K562 (cell line): ENCODE measurements at regions of chr17 and their contacts with region 1.

Region 1: GRCh38 chr17:68457539-68458259 is 403 bp upstream of the WIPI1 start:
- DNase-seq: peak; percentile 97 to 99 (median 98)
- ATAC-seq: peak; percentile 94
- H3K4me3 ChIP-seq: peak overlapping the region; percentile 46
- H3K27ac ChIP-seq: no peak overlapping the region; the same call in 1 of the 3 replicates
- H3K4me1 ChIP-seq: peaks cover 13 to 44% of the 10 kb centered on the region in 2 experiments
- H3K27me3 ChIP-seq: no peaks in the 10 kb centered on the region
- CTCF ChIP-seq: no peak
- EP300 ChIP-seq: 0 out of 2 replicates have a peak, but pooled peaks have one; percentile 10
- POLR2A ChIP-seq: no peak
- RAD21 ChIP-seq: no peak

Region 2: DNA sequence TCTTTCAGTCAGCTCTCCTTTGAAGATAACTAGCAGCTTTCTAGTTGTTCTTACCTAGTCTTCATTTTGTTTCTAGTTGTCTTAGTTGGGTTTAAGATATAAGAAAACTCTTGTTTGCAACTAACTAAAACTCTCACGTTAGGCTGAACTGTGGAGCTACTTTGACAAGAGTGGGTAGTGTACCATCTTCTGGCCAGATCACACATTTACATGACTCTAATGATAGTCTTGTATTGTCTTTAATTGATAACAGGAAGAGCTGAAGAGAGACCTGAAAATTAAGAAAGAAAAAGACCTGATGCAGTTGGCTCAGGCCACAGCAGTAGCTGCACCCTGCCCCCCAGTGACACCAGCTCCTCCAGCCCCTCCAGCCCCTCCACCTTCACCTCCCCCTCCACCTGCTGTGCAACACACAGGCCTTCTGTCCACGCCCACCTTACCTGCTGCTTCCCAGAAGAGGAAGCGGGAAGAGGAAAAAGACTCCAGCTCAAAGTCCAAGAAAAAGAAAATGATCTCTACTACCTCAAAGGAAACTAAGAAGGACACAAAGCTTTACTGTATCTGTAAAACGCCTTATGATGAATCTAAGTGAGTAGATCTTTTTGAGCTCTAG is 498.3 kb before region 1 on chr17:
- CTCF ChIA-PET with region 1: no interaction called
- POLR2A ChIA-PET with region 1: no interaction called
- in situ Hi-C with region 1: loop called (anchors 25 kb)
- intact Hi-C with region 1: no loop called
- DNase-seq: no peak
- ATAC-seq: no peak
- H3K4me3 ChIP-seq: no peak overlapping the region
- H3K27ac ChIP-seq: no peak overlapping the region
- H3K4me1 ChIP-seq: peaks cover 0 to 2% of the 10 kb centered on the region in 2 experiments; a peak in 1 of 5 replicates
- H3K27me3 ChIP-seq: no peaks in the 10 kb centered on the region
- CTCF ChIP-seq: no peak; a peak in 1 of 6 replicates
- EP300 ChIP-seq: no peak
- POLR2A ChIP-seq: no peak
- RAD21 ChIP-seq: no peak

Region 3: DNA sequence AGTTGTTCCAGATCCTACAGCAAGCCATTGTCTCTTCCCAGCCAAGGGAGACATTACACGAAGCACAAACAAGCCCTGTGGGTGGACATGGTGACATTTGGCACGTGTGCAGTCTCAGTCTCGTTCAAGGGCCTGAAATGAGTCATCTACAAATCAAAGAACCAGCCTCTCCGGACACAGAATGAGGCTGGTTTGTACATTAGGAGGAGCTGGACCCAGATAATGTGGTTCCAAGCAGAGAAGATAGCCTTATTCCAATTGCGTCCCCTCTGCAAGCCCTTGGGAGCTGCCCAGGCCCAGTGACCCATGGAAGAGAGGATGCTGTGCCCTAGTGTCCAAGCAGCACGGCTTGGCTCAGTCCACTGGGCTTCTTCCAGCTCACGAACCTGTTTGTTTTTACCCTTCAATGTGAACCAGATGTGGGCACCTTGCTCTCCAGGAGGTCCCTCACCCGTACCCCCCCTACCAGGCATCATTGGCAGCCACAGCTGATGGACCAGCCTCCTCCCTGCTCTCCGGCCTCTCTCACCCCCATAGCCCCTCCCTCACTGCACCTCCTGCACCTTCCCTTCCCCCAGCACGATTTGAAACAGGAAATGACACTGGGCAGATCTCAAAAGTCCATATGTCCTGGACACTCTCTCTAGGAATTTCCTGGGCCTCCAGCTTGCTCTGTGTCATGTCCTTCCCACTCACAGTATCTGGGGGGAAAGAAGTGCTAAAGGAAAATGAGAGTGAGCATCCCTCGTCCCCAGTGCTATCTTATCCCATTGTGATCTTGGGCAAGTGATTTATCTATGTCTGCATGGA is 396.0 kb before region 1 on chr17:
- CTCF ChIA-PET with region 1: no interaction called
- POLR2A ChIA-PET with region 1: no interaction called
- in situ Hi-C with region 1: no loop called
- intact Hi-C with region 1: loop called (anchors 5 kb)
- DNase-seq: no peak
- ATAC-seq: peak; percentile 28; the same call in 2 of the 3 replicates
- H3K4me3 ChIP-seq: no peak overlapping the region
- H3K27ac ChIP-seq: no peak overlapping the region
- H3K4me1 ChIP-seq: no peaks in the 10 kb centered on the region
- H3K27me3 ChIP-seq: no peaks in the 10 kb centered on the region
- CTCF ChIP-seq: no peak
- EP300 ChIP-seq: no peak
- POLR2A ChIP-seq: no peak
- RAD21 ChIP-seq: no peak

Region 4: DNA sequence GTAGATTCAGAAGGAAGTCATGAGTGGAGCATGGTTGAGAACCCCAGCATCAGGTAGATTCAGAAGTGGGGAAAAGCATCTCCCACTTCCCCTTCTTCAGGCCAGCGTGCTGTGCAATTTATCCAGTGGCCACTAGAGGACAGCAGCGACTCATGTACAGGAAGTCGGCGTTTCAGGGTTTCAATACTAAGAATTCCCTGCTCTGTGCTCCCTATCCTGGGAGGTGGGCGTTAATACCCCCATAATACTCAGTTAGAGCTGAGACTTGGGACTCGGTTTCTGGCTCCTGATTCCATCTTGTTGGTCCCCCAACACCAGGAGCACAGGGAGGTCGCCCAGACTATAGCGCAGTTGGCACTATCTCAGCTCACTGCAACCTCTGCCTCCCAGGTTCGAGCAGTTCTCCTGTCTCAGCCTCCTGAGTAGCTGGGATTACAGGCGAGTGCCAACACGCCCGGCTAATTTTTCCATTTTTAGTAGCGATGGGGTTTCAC is 285.2 kb before region 1 on chr17:
- CTCF ChIA-PET with region 1: interaction called, 5 read pairs
- POLR2A ChIA-PET with region 1: no interaction called
- in situ Hi-C with region 1: loop called (anchors 10 kb)
- intact Hi-C with region 1: no loop called
- DNase-seq: peak; percentile 26 to 73 (median 33)
- ATAC-seq: peak; percentile 89
- H3K4me3 ChIP-seq: no peak overlapping the region
- H3K27ac ChIP-seq: no peak overlapping the region
- H3K4me1 ChIP-seq: peaks cover 0 to 6% of the 10 kb centered on the region in 2 experiments; a peak in 3 of 5 replicates
- H3K27me3 ChIP-seq: no peaks in the 10 kb centered on the region; a peak in 2 of 5 replicates
- CTCF ChIP-seq: peak; percentile 82 to 95 (median 94)
- EP300 ChIP-seq: no peak
- POLR2A ChIP-seq: no peak
- RAD21 ChIP-seq: peak; percentile 91 to 93

Region 5: DNA sequence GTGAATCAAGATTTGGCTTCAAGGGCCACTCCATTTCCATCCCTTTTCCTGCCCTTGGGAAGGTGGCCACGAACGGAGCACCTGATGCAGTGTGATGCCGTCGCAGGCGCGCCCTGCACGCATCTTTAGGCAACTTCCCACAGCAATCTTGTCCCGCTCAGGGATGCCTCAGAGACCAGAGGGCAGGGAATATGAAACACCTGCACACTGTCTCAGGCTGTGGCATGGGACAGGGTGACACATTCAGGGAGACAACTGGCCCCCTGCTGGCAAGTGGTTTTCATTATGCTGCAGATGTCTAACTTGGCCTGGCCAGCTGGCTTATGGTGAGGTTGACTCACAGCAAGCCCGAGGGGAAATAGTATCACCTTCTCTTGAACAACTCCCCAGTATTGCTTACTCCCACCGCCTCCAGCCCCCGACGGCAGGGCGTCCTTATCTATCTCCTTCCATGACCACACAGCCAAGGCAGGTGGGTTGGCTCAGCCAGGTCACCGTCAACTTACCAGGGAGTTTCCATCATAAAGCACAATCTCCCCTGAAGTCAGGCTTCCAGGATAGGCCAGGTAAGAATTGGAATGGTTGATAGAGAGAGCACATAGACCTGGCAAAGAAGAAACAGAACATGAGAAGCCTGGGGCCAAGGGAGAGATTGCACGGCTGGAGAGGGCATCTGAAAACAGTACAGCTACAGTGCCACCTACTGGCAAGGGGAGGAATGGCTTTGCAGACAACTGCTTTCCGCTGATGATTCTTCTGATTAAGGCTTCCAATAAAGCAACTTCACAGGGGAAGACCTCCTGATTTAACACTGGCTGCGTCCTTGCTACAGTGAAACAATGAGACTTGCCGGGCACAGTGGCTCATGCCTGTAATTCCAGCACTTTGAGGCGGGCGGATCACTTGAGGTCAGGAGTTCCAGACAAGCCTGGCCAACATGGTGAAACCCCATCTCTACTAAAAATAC is 21.5 kb before region 1 on chr17:
- CTCF ChIA-PET with region 1: interaction called, 3 read pairs
- POLR2A ChIA-PET with region 1: interaction called, 8 read pairs
- in situ Hi-C with region 1: no loop called
- intact Hi-C with region 1: loop called (anchors 2 kb)
- DNase-seq: peak; percentile 69 to 87 (median 72)
- ATAC-seq: peak; percentile 79
- H3K4me3 ChIP-seq: no peak overlapping the region
- H3K27ac ChIP-seq: no peak overlapping the region; the same call in 2 of the 3 replicates
- H3K4me1 ChIP-seq: peaks cover 17 to 28% of the 10 kb centered on the region in 2 experiments
- H3K27me3 ChIP-seq: no peaks in the 10 kb centered on the region
- CTCF ChIP-seq: peak; percentile 79 to 93 (median 91)
- EP300 ChIP-seq: 0 out of 2 replicates have a peak, but pooled peaks have one; percentile 6
- POLR2A ChIP-seq: no peak
- RAD21 ChIP-seq: peak; percentile 66 to 76

Region 6: DNA sequence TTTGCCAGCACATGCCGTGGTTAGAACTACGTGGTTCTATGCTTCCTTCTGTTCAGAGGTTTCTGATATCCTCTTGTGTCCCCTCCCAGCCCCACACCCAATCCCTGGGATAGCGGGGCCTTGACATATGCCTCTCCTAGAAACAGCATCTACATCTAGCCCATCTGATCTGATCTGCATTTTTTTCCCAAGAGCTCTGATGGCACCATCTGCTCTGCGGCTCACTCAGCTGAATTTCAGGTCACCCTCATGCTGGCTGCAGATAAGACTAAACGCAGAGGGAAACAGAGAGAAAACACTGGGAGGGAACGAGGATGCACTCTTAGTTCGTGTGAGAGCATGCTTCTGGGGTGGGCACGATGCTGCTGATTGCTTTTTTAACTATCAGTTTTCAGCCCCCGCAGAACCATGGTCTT is 11.1 kb before region 1 on chr17:
- CTCF ChIA-PET with region 1: interaction called, 3 read pairs
- POLR2A ChIA-PET with region 1: interaction called, 12 read pairs
- in situ Hi-C with region 1: no loop called
- intact Hi-C with region 1: no loop called
- DNase-seq: peak in 3 of 4 experiments; percentile 21 to 63 (median 33)
- ATAC-seq: peak; percentile 80
- H3K4me3 ChIP-seq: no peak overlapping the region
- H3K27ac ChIP-seq: no peak overlapping the region
- H3K4me1 ChIP-seq: peaks cover 0 to 16% of the 10 kb centered on the region in 2 experiments; a peak in 4 of 5 replicates
- H3K27me3 ChIP-seq: no peaks in the 10 kb centered on the region
- CTCF ChIP-seq: no peak
- EP300 ChIP-seq: peak; percentile 34; the same call in 1 of the 2 replicates
- POLR2A ChIP-seq: no peak
- RAD21 ChIP-seq: no peak

Region 7: GRCh38 chr17:68759343-68760132 is 301.8 kb after region 1 on chr17:
- CTCF ChIA-PET with region 1: no interaction called
- POLR2A ChIA-PET with region 1: no interaction called
- in situ Hi-C with region 1: no loop called
- intact Hi-C with region 1: loop called (anchors 2 kb)
- DNase-seq: peak; percentile 84 to 93 (median 86)
- ATAC-seq: peak; percentile 99
- H3K4me3 ChIP-seq: peak overlapping the region; percentile 23
- H3K27ac ChIP-seq: peak overlapping the region; percentile 63
- H3K4me1 ChIP-seq: peaks cover 3 to 6% of the 10 kb centered on the region in 2 experiments; a peak in 2 of 5 replicates
- H3K27me3 ChIP-seq: no peaks in the 10 kb centered on the region; a peak in 1 of 5 replicates
- CTCF ChIP-seq: peak; percentile 84 to 96 (median 95)
- EP300 ChIP-seq: peak; percentile 3; the same call in 1 of the 2 replicates
- POLR2A ChIP-seq: no peak
- RAD21 ChIP-seq: peak; percentile 90 to 94